ENCODE measurements at regions of chr11 and their contacts with region 1.

Region 1: GRCh38 chr11:44538375-44539054 is 26.9 kb upstream of the CD82 start:
- DNase-seq: peak; percentile 48
- ATAC-seq: peak; percentile 98
- H3K4me3 ChIP-seq: no peak overlapping the region
- H3K27ac ChIP-seq: no peak overlapping the region
- H3K4me1 ChIP-seq: no peaks in the 10 kb centered on the region
- H3K27me3 ChIP-seq: peaks cover 1 to 4% of the 10 kb centered on the region in 2 experiments; a peak in 2 of 5 replicates
- CTCF ChIP-seq: peak; percentile 96
- EP300 ChIP-seq: no peak
- POLR2A ChIP-seq: no peak
- RAD21 ChIP-seq: peak; percentile 85

Region 2: DNA sequence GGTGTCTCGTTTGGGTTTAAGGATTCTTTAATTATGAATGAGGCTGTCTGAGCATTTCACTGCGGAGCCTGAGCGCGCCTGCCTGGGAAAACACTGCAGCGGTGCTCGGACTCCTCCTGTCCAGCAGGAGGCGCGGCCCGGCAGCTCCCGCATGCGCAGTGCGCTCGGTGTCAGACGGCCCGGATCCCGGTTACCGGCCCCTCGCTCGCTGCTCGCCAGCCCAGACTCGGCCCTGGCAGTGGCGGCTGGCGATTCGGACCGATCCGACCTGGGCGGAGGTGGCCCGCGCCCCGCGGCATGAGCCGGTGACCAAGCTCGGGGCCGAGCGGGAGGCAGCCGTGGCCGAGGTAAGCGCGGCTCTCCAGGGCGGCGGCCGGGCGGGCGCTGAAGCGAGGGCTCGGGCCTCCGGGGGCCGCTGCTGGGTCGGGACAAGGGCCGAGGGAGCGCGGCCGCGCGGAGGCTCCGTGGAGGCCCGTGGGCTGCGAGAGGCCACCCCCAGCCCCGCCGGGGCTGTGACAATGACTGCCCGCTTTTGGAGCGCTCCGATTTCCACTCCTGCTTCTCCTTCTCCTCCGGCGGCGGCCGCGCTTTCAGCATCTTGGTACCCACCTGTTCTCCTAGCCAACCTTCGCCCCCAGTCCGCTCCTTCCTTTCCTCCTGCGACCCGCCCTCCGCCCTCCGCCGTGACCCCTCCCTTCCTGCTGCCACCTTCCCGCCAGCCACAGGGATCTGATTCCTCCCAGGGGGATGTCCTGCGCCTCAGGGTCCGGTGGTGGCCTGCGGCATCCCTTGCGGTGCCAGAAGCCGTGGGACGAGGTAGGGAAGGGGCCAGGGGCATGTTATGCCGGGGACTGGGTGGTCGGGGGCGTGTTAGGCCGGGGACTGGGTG is 442.8 kb before region 1 on chr11 and contains the start of gene EXT2:
- CTCF ChIA-PET with region 1: interaction called, 17 read pairs
- POLR2A ChIA-PET with region 1: no interaction called
- in situ Hi-C with region 1: loop called (anchors 10 kb)
- intact Hi-C with region 1: loop called (anchors 1 kb)
- DNase-seq: peak; percentile 66
- ATAC-seq: peak; percentile 94
- H3K4me3 ChIP-seq: peak within 1 kb of the TSS; percentile 80 to 96 (median 90)
- H3K27ac ChIP-seq: peak within 1 kb of the TSS; percentile 55
- H3K4me1 ChIP-seq: peaks cover 19% of the 10 kb centered on the region
- H3K27me3 ChIP-seq: no peaks in the 10 kb centered on the region
- CTCF ChIP-seq: peak; percentile 90
- EP300 ChIP-seq: no peak
- POLR2A ChIP-seq: peak in 1 of 2 experiments; percentile 69; a peak in 2 of 4 replicates
- RAD21 ChIP-seq: no peak
- total RNA-seq, gene EXT2: 32.7 and 68.7 TPM in 2 replicates

Region 3: DNA sequence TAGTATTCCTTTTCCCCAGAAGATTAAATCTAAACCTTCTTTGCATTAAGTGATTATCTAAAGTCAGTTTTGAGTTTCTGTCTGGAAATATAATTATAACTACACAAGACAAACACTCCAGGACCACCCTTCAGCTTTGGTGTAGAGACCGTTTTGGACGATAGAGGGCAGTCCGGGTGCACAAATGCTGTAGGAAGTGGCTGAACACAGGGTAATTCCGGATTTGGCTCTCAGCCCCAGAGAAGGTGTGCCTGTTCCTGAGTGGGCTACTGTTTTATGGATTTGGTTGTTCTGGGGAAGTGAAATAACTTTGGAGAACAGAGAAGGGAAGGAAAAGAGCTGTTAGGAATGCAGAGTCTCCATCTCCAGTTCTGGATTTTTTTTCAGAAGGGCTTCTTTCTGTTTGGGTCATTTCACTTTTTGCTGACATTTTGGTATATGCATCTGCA is 428.3 kb before region 1 on chr11:
- CTCF ChIA-PET with region 1: interaction called, 9 read pairs
- POLR2A ChIA-PET with region 1: no interaction called
- in situ Hi-C with region 1: no loop called
- intact Hi-C with region 1: loop called (anchors 1 kb)
- DNase-seq: peak; percentile 47
- ATAC-seq: peak; percentile 95
- H3K4me3 ChIP-seq: no peak overlapping the region
- H3K27ac ChIP-seq: no peak overlapping the region
- H3K4me1 ChIP-seq: 0 out of 2 replicates have a peak, but pooled peaks cover 5% of the 10 kb centered on the region
- H3K27me3 ChIP-seq: no peaks in the 10 kb centered on the region
- CTCF ChIP-seq: peak; percentile 84
- EP300 ChIP-seq: no peak
- POLR2A ChIP-seq: no peak
- RAD21 ChIP-seq: 0 out of 2 replicates have a peak, but pooled peaks have one; percentile 20

Region 4: GRCh38 chr11:44286268-44286880 is 252.1 kb before region 1 on chr11:
- CTCF ChIA-PET with region 1: interaction called, 11 read pairs
- POLR2A ChIA-PET with region 1: no interaction called
- in situ Hi-C with region 1: loop called (anchors 25 kb)
- intact Hi-C with region 1: loop called (anchors 1 kb)
- DNase-seq: peak; percentile 35
- ATAC-seq: peak; percentile 84
- H3K4me3 ChIP-seq: no peak overlapping the region
- H3K27ac ChIP-seq: no peak overlapping the region
- H3K4me1 ChIP-seq: peaks cover 7% of the 10 kb centered on the region; the same call in 1 of the 2 replicates
- H3K27me3 ChIP-seq: peaks cover 2 to 4% of the 10 kb centered on the region in 2 experiments; a peak in 3 of 5 replicates
- CTCF ChIP-seq: peak; percentile 93
- EP300 ChIP-seq: no peak
- POLR2A ChIP-seq: no peak
- RAD21 ChIP-seq: peak; percentile 80

Region 5: DNA sequence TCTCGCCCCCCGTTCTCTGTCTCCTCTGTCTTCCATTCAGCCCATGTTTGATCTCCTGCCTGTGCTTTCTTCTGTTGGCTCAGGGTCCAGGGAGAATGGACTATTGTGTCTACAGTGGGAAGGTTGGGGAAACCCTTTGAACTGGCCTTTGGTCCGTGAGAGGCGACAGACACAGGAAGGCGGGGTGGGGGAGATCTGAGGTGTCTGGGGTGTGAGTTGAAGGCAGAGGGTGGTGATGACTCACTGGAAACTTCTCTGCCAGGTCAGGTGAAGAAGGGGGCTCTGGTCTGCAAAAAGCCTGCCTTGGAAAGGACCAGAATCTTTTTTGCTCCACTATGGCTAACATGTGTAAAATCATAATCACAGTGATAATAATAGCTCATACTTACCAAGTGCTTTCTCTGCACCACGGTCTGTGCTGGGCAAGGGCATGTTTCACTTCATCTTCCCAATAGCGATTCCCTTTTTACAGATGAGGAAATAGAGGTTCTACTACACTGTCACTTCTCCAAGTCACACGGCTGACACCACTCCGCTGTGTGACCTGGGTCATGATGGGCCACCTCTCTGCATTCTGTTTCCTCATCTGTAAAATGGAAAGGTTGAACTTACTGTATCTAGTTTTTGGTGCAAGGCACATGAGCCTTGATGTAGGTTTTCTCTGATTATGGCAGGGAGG is 128.8 kb before region 1 on chr11:
- CTCF ChIA-PET with region 1: no interaction called
- POLR2A ChIA-PET with region 1: no interaction called
- in situ Hi-C with region 1: no loop called
- intact Hi-C with region 1: no loop called
- DNase-seq: peak; percentile 13
- ATAC-seq: peak; percentile 62; the same call in 2 of the 3 replicates
- H3K4me3 ChIP-seq: no peak overlapping the region
- H3K27ac ChIP-seq: no peak overlapping the region
- H3K4me1 ChIP-seq: peaks cover 10% of the 10 kb centered on the region
- H3K27me3 ChIP-seq: peaks cover 2 to 29% of the 10 kb centered on the region in 2 experiments
- CTCF ChIP-seq: no peak
- EP300 ChIP-seq: no peak
- POLR2A ChIP-seq: no peak
- RAD21 ChIP-seq: no peak

Region 6: DNA sequence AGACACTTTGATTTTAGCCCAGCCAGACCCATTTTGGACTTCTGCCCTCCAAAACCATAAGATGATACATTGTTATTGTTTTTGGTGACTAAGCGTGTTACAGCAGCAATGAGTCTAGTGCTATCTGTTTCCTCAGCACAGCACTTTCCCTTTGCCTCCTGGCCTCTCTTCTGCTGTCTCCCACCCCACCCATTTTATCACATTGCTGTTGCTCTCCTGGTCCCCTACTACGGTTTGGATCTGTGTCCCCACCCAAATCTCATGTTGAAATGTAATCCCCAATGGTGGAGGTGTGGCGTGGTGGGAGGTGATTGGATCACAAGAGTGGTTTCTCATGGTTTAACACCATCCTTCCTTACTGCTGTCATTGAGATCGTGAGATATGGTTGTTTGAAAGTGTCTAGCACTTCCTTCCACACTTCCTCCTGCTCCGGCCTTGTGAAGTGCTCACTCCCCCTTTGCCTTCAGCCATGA is 32.9 kb before region 1 on chr11:
- CTCF ChIA-PET with region 1: no interaction called
- POLR2A ChIA-PET with region 1: no interaction called
- in situ Hi-C with region 1: no loop called
- intact Hi-C with region 1: no loop called
- DNase-seq: no peak
- ATAC-seq: no peak
- H3K4me3 ChIP-seq: no peak overlapping the region
- H3K27ac ChIP-seq: no peak overlapping the region
- H3K4me1 ChIP-seq: no peaks in the 10 kb centered on the region
- H3K27me3 ChIP-seq: peaks cover 0 to 1% of the 10 kb centered on the region in 2 experiments; a peak in 1 of 5 replicates
- CTCF ChIP-seq: no peak
- EP300 ChIP-seq: no peak
- POLR2A ChIP-seq: no peak
- RAD21 ChIP-seq: no peak

Region 7: GRCh38 chr11:44519989-44520737 is 18.4 kb before region 1 on chr11:
- CTCF ChIA-PET with region 1: interaction called, 20 read pairs
- POLR2A ChIA-PET with region 1: no interaction called
- in situ Hi-C with region 1: no loop called
- intact Hi-C with region 1: loop called (anchors 1 kb)
- DNase-seq: no peak
- ATAC-seq: no peak
- H3K4me3 ChIP-seq: no peak overlapping the region
- H3K27ac ChIP-seq: no peak overlapping the region
- H3K4me1 ChIP-seq: no peaks in the 10 kb centered on the region
- H3K27me3 ChIP-seq: peaks cover 2 to 13% of the 10 kb centered on the region in 2 experiments; a peak in 3 of 5 replicates
- CTCF ChIP-seq: no peak
- EP300 ChIP-seq: no peak
- POLR2A ChIP-seq: no peak
- RAD21 ChIP-seq: no peak

Region 8: DNA sequence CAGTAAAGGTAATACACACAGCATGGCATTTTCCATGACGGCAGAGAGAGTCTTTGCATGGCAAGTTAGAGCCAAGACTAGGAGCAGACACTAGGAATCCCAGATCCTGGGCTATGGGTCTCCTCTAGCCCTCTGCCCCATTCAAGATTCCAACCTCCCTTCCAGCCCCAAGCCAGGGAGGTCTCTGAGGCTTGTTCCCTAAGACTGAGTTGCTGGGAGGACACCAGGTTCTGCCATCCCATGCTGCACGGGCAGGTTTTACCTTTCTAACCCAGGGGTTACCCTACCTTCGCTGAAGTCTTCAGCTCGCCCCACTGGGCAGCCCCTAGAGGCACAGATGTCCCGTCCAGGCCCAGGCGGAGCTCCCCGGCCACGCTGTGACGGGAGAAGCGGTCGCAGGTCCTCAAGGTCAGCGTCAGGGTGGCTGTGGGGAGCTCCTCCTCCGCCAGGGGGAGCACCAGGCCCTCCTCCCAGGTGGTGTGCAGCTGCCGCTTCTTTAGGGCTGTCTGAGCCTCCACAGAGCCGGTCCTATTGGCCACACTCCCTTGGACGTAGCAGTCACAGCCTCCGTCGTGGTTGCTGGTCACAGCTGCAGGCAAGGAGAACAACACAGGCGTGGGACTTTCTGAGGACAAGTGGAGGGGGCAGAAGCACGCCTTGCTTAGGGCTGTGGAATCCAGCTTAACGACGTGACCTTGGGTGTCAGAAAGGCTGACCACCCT is 713.8 kb after region 1 on chr11:
- CTCF ChIA-PET with region 1: no interaction called
- POLR2A ChIA-PET with region 1: no interaction called
- in situ Hi-C with region 1: no loop called
- intact Hi-C with region 1: no loop called
- DNase-seq: peak; percentile 35
- ATAC-seq: peak; percentile 99
- H3K4me3 ChIP-seq: no peak overlapping the region
- H3K27ac ChIP-seq: no peak overlapping the region
- H3K4me1 ChIP-seq: no peaks in the 10 kb centered on the region
- H3K27me3 ChIP-seq: peaks cover 2 to 21% of the 10 kb centered on the region in 2 experiments; a peak in 2 of 5 replicates
- CTCF ChIP-seq: peak; percentile 90
- EP300 ChIP-seq: no peak
- POLR2A ChIP-seq: no peak
- RAD21 ChIP-seq: peak; percentile 68